CD8-positive, alpha-beta memory T cell (primary cell): ENCODE measurements at regions of chr1 and their contacts with region 1.

Region 1: GRCh38 chr1:159089184-159089791 is 12.7 kb upstream of the AIM2 start:
- DNase-seq: peak in 3 of 5 donors; percentile 2 to 16 (median 3)
- H3K4me3 ChIP-seq: no peak overlapping the region
- H3K4me3 Mint-ChIP-seq: no peak overlapping the region
- H3K27ac ChIP-seq: no peak overlapping the region
- H3K27ac Mint-ChIP-seq: no peak overlapping the region
- H3K4me1 ChIP-seq: no peaks in the 10 kb centered on the region
- H3K4me1 Mint-ChIP-seq: peaks cover 10 to 15% (median 14%) of the 10 kb centered on the region in 3 donors
- H3K27me3 ChIP-seq: no peaks in the 10 kb centered on the region
- H3K27me3 Mint-ChIP-seq: no peaks in the 10 kb centered on the region

Region 2: DNA sequence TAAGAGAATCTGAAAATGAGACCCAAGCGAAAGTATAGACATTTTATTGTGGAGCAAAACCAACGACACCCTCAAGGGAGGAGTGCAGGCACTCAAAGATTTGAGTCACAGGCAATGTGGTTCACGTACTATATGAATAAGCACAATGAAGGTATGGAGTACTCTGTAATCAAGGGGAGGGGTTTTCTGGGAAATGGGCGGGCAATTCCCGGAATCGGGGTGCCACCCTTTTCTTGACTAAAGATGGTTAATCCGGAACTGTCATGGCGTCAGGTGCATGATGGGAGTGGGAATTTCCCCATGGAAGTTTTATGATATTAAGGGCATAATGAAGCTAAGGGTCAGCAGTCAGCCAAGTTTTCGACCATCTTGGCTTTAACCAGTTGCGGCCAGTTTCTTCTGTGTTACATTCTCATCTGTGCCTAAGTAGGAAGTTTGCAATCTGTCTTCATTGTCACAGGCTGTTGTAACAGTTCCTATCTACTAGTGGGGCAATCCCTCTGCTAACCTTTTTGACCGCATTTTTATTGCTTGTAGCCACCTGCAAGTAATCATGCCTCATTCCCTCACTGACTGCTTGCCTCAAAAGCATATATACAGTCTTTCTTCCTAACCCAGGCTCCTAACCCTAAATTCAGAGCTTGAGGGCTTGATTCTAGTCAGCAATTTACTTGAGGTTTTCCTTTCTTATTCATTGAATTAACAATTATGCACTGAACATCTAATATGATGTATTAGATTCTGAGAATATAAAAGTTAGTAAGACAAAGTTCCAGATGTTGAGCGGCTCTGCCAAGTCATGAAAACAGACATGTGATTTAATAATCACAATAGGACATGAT is 11.9 kb before region 1 on chr1:
- CTCF ChIA-PET with region 1: interaction called, 14 read pairs
- POLR2A ChIA-PET with region 1: no interaction called
- DNase-seq: peak in 4 of 5 donors; percentile 73 to 91 (median 84)
- H3K4me3 ChIP-seq: peak overlapping the region; percentile 49
- H3K4me3 Mint-ChIP-seq: peak overlapping the region; percentile 77 to 91 (median 83)
- H3K27ac ChIP-seq: peak overlapping the region; percentile 89
- H3K27ac Mint-ChIP-seq: peak overlapping the region; percentile 87 to 98 (median 97)
- H3K4me1 ChIP-seq: peaks cover 31% of the 10 kb centered on the region
- H3K4me1 Mint-ChIP-seq: peaks cover 34 to 48% (median 42%) of the 10 kb centered on the region in 3 donors
- H3K27me3 ChIP-seq: no peaks in the 10 kb centered on the region
- H3K27me3 Mint-ChIP-seq: no peaks in the 10 kb centered on the region